ENCODE measurements at regions of chr15 and their contacts with region 1.

Region 1: GRCh38 chr15:67065444-67066093 is at the start of gene SMAD3:
- DNase-seq: peak; percentile 28 to 82 (median 58)
- ATAC-seq: peak; percentile 78
- H3K4me3 ChIP-seq: peak within 1 kb of the TSS; percentile 79
- H3K4me3 Mint-ChIP-seq: peak within 1 kb of the TSS; percentile 90 to 100 (median 94)
- H3K27ac ChIP-seq: peak within 1 kb of the TSS; percentile 68
- H3K27ac Mint-ChIP-seq: peak within 1 kb of the TSS; percentile 53 to 96 (median 91)
- H3K4me1 ChIP-seq: peaks cover 20 to 51% of the 10 kb centered on the region in 2 donors
- H3K4me1 Mint-ChIP-seq: peaks cover 37 to 67% (median 56%) of the 10 kb centered on the region in 7 donors
- H3K27me3 ChIP-seq: no peaks in the 10 kb centered on the region
- H3K27me3 Mint-ChIP-seq: peaks cover 0 to 14% (median 0%) of the 10 kb centered on the region in 5 donors
- total RNA-seq, gene SMAD3: 27.4 to 142 (median 113) TPM

Region 2: DNA sequence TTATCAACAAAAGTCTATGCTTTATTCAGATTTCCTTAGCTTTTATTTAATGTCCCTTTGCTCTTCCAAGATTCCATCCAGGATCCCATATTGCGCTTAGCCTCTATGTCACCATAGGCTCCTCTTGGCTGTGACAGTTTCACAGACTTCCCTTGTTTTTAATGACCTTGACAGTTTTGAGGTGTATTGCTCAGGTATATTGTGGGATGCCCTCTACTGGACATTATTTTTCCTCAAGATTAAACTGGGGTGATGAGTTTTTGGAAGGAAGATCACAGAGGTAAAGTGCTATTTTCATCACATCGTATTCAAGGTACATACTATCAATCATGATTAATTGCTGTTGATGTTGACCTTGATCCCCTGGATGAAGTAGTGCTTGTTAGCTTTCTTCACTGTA is 99.3 kb before region 1 on chr15:
- CTCF ChIA-PET with region 1: no interaction called
- POLR2A ChIA-PET with region 1: interaction called, 3 read pairs
- intact Hi-C with region 1: loop called in 1 of 2 experiments (anchors 5 kb)
- DNase-seq: peak in 5 of 9 donors; percentile 8 to 29 (median 12)
- ATAC-seq: no peak
- H3K4me3 ChIP-seq: no peak overlapping the region
- H3K4me3 Mint-ChIP-seq: no peak overlapping the region
- H3K27ac ChIP-seq: no peak overlapping the region
- H3K27ac Mint-ChIP-seq: no peak overlapping the region
- H3K4me1 ChIP-seq: no peaks in the 10 kb centered on the region
- H3K4me1 Mint-ChIP-seq: no peaks in the 10 kb centered on the region
- H3K27me3 ChIP-seq: no peaks in the 10 kb centered on the region
- H3K27me3 Mint-ChIP-seq: peaks cover 0 to 18% (median 0%) of the 10 kb centered on the region in 5 donors

Region 3: GRCh38 chr15:67080900-67081431 is 15.4 kb after region 1 on chr15:
- CTCF ChIA-PET with region 1: interaction called, 22 read pairs
- POLR2A ChIA-PET with region 1: interaction called, 104 read pairs
- intact Hi-C with region 1: loop called (anchors 1 kb)
- DNase-seq: peak in 1 of 9 donors; percentile 63
- ATAC-seq: peak; percentile 75
- H3K4me3 ChIP-seq: no peak overlapping the region
- H3K4me3 Mint-ChIP-seq: peak overlapping the region; percentile 6 to 98 (median 46)
- H3K27ac ChIP-seq: no peak overlapping the region
- H3K27ac Mint-ChIP-seq: peak overlapping the region; percentile 55 to 95 (median 81)
- H3K4me1 ChIP-seq: peaks cover 69 to 89% of the 10 kb centered on the region in 2 donors
- H3K4me1 Mint-ChIP-seq: peaks cover 56 to 96% (median 94%) of the 10 kb centered on the region in 7 donors
- H3K27me3 ChIP-seq: no peaks in the 10 kb centered on the region
- H3K27me3 Mint-ChIP-seq: no peaks in the 10 kb centered on the region

Region 4: GRCh38 chr15:67114846-67115600 is 49.5 kb after region 1 on chr15:
- CTCF ChIA-PET with region 1: no interaction called
- POLR2A ChIA-PET with region 1: interaction called, 10 read pairs
- intact Hi-C with region 1: no loop called
- DNase-seq: no peak
- ATAC-seq: peak; percentile 25
- H3K4me3 ChIP-seq: no peak overlapping the region
- H3K4me3 Mint-ChIP-seq: peak overlapping the region in 9 of 10 donors; percentile 10 to 74 (median 35)
- H3K27ac ChIP-seq: no peak overlapping the region
- H3K27ac Mint-ChIP-seq: peak overlapping the region in 8 of 9 donors; percentile 42 to 97 (median 71)
- H3K4me1 ChIP-seq: peaks cover 74 to 76% of the 10 kb centered on the region in 2 donors
- H3K4me1 Mint-ChIP-seq: peaks cover 62 to 92% (median 82%) of the 10 kb centered on the region in 7 donors
- H3K27me3 ChIP-seq: no peaks in the 10 kb centered on the region
- H3K27me3 Mint-ChIP-seq: no peaks in the 10 kb centered on the region

Region 5: GRCh38 chr15:67150028-67150860 is 84.7 kb after region 1 on chr15:
- CTCF ChIA-PET with region 1: no interaction called
- POLR2A ChIA-PET with region 1: interaction called, 3 read pairs
- intact Hi-C with region 1: loop called in 1 of 2 experiments (anchors 5 kb)
- DNase-seq: peak in 1 of 9 donors; percentile 61
- ATAC-seq: peak; percentile 61
- H3K4me3 ChIP-seq: peak overlapping the region; percentile 0
- H3K4me3 Mint-ChIP-seq: peak overlapping the region; percentile 4 to 74 (median 49)
- H3K27ac ChIP-seq: no peak overlapping the region
- H3K27ac Mint-ChIP-seq: peak overlapping the region in 6 of 9 donors; percentile 7 to 57 (median 30)
- H3K4me1 ChIP-seq: peaks cover 35 to 48% of the 10 kb centered on the region in 2 donors
- H3K4me1 Mint-ChIP-seq: peaks cover 48 to 78% (median 65%) of the 10 kb centered on the region in 7 donors
- H3K27me3 ChIP-seq: no peaks in the 10 kb centered on the region
- H3K27me3 Mint-ChIP-seq: no peaks in the 10 kb centered on the region

Region 6: DNA sequence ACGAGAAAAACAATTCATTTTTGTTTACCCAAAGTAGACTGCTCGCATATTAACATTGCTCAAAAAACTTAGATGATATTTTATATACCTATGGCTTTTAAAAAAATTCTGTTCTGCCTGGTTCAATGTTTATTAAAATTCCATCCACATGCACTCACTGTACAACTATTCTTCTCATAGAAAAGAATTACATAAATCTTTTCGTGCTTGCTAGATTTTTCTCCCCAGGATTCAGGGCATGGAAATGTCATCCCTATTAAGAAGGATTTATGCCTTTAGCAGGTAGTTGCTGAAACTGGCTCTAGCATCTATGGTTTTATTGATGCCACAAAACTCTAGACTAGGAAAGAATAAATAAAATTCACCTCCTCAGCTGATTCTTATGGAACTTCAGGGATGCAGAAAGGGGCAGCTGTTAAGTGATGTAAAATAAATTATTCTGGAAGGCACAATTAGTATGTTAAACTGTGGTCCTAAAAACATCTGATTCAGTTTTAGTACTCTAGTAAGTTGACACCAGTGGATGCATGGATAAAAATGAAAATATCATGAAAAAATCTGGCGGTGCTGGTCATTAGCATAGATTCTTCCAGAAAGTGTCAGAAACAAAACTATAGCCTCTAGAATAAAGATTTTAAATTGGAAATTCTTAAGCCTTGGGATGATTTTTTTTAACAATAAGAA is 147.3 kb after region 1 on chr15:
- CTCF ChIA-PET with region 1: no interaction called
- POLR2A ChIA-PET with region 1: no interaction called
- intact Hi-C with region 1: no loop called
- DNase-seq: no peak
- ATAC-seq: no peak
- H3K4me3 ChIP-seq: no peak overlapping the region
- H3K4me3 Mint-ChIP-seq: no peak overlapping the region
- H3K27ac ChIP-seq: no peak overlapping the region
- H3K27ac Mint-ChIP-seq: no peak overlapping the region
- H3K4me1 ChIP-seq: no peaks in the 10 kb centered on the region
- H3K4me1 Mint-ChIP-seq: peaks cover 0 to 11% (median 2%) of the 10 kb centered on the region in 7 donors
- H3K27me3 ChIP-seq: no peaks in the 10 kb centered on the region
- H3K27me3 Mint-ChIP-seq: no peaks in the 10 kb centered on the region

Region 7: GRCh38 chr15:67303490-67304363 is 238.2 kb after region 1 on chr15:
- CTCF ChIA-PET with region 1: no interaction called
- POLR2A ChIA-PET with region 1: no interaction called
- intact Hi-C with region 1: loop called in 1 of 2 experiments (anchors 10 kb)
- DNase-seq: peak in 7 of 9 donors; percentile 22 to 63 (median 40)
- ATAC-seq: no peak
- H3K4me3 ChIP-seq: no peak overlapping the region
- H3K4me3 Mint-ChIP-seq: no peak overlapping the region
- H3K27ac ChIP-seq: no peak overlapping the region
- H3K27ac Mint-ChIP-seq: no peak overlapping the region
- H3K4me1 ChIP-seq: no peaks in the 10 kb centered on the region
- H3K4me1 Mint-ChIP-seq: no peaks in the 10 kb centered on the region
- H3K27me3 ChIP-seq: no peaks in the 10 kb centered on the region
- H3K27me3 Mint-ChIP-seq: peaks cover 0 to 9% (median 0%) of the 10 kb centered on the region in 5 donors